A673 (cell line): ENCODE measurements at regions of chr14 and their contacts with region 1.

Region 1: GRCh38 chr14:103292426-103293374 is 41.3 kb upstream of the EIF5 start:
- DNase-seq: peak; percentile 81
- H3K4me3 ChIP-seq: no peak overlapping the region
- H3K27ac ChIP-seq: no peak overlapping the region
- H3K4me1 ChIP-seq: no peaks in the 10 kb centered on the region
- H3K27me3 ChIP-seq: no peaks in the 10 kb centered on the region
- CTCF ChIP-seq: peak; percentile 91

Region 2: DNA sequence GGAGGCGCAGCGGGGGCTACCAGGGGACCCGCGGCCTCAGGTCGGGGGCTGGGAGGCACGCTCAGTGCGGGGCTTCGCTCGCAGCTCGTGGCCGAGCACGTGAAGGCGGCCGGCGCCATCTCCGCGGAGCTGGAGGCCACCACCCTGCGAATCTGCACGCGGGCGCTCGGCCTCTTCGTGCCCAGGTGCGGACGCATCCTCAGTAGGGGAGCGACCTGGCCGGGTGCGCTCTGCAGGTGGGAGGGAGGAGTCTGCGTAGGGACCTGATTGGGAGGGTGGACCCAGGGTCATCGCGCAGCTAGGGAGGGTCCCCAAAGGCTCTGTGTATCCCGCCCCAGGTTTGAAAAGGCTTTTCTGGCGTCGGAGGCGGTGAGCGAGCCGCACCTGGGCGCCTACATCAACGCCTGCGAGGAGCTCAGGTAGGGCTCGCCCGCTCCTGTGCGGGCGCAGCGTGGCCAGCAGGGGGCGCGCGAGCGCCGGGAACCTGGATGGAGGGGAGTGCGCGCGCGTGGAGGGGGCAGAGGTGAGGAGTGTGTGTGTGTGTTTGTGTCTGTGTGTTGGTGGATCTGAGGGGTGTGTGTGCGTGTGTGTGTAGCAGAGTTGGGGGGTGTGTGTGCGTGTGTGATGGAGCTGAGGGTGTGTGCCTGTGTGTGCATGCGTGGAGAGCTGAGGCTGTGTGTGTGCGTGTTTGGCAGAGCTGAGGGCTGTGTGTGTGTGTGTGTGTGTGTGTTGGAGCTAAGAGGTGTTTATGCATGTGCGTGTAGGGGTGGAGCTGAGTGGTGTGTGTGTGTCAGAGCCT is 187.8 kb before region 1 on chr14:
- CTCF ChIA-PET with region 1: interaction called, 29 read pairs
- POLR2A ChIA-PET with region 1: no interaction called
- intact Hi-C with region 1: loop called (anchors 1 kb)
- DNase-seq: peak; percentile 64
- H3K4me3 ChIP-seq: no peak overlapping the region
- H3K27ac ChIP-seq: no peak overlapping the region
- H3K4me1 ChIP-seq: peaks cover 12% of the 10 kb centered on the region
- H3K27me3 ChIP-seq: peaks cover 30% of the 10 kb centered on the region
- CTCF ChIP-seq: peak; percentile 100

Region 3: DNA sequence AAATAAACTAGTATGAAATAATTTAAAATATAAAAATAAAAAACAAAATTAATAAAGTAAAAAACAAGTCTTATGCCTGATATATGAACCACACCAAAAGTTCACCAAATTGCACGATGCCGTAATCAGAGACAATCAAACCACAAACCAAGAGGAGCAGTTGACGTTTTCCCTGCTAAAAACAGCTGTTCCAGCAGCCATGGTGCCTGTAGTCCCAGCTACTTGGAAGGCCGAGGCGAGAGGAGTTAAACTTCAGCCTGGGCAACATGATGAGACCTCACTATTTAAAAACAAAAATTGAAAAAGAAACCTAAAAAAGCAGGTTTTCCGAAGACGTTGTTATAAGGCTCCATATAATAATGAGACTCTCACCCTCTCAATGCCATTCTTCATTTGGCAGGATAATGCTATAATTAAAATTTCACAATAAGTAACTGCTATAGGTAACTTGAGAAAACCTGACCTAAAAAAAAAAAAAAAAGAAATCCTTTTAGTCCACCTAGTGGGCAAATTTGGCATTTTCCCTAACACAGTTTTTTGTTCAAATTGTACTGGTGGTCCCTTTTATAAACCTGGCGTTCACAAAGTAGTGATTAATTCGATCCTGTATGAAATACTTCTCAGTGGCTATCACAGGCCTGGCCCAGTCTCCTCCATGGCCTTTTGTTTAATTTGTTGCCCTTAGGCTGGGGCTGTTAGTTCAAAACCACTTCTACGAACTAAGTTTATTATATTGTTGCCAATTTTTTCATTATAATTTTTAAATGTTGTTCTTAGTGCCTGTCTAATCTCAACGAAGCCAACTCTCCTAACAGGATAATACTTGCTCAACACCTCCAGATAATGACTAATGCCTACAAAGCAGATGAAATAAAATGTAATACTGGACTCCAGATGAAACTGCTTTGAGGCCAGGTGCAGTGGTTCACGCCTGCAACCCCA is 107.4 kb before region 1 on chr14:
- CTCF ChIA-PET with region 1: no interaction called
- POLR2A ChIA-PET with region 1: no interaction called
- intact Hi-C with region 1: loop called (anchors 5 kb)
- DNase-seq: peak; percentile 65
- H3K4me3 ChIP-seq: no peak overlapping the region
- H3K27ac ChIP-seq: no peak overlapping the region
- H3K4me1 ChIP-seq: no peaks in the 10 kb centered on the region
- H3K27me3 ChIP-seq: no peaks in the 10 kb centered on the region
- CTCF ChIP-seq: peak; percentile 76

Region 4: GRCh38 chr14:103281496-103282231 is 11.0 kb before region 1 on chr14:
- CTCF ChIA-PET with region 1: interaction called, 13 read pairs
- POLR2A ChIA-PET with region 1: no interaction called
- intact Hi-C with region 1: no loop called
- DNase-seq: peak; percentile 77
- H3K4me3 ChIP-seq: no peak overlapping the region
- H3K27ac ChIP-seq: no peak overlapping the region
- H3K4me1 ChIP-seq: peaks cover 4% of the 10 kb centered on the region
- H3K27me3 ChIP-seq: no peaks in the 10 kb centered on the region
- CTCF ChIP-seq: peak; percentile 59